Caco-2 (cell line): ENCODE measurements at regions of chr9 and their contacts with region 1.

Region 1: GRCh38 chr9:75953218-75953617 is 62.7 kb downstream of the PCSK5 start:
- DNase-seq: peak in 1 of 2 experiments; percentile 13
- H3K4me3 ChIP-seq: no peak overlapping the region
- H3K4me3 Mint-ChIP-seq: no peak overlapping the region
- H3K27ac Mint-ChIP-seq: no peak overlapping the region
- H3K4me1 ChIP-seq: no peaks in the 10 kb centered on the region
- H3K4me1 Mint-ChIP-seq: no peaks in the 10 kb centered on the region
- H3K27me3 ChIP-seq: no peaks in the 10 kb centered on the region
- H3K27me3 Mint-ChIP-seq: no peaks in the 10 kb centered on the region
- CTCF ChIP-seq: no peak

Region 2: GRCh38 chr9:75890472-75891276 is 62.5 kb before region 1 on chr9 and contains the start of gene PCSK5:
- CTCF ChIA-PET with region 1: no interaction called
- POLR2A ChIA-PET with region 1: no interaction called
- intact Hi-C with region 1: loop called (anchors 10 kb)
- DNase-seq: peak; percentile 75 to 89
- H3K4me3 ChIP-seq: peak within 1 kb of the TSS; percentile 58
- H3K4me3 Mint-ChIP-seq: peak within 1 kb of the TSS; percentile 84
- H3K27ac Mint-ChIP-seq: peak within 1 kb of the TSS; percentile 73
- H3K4me1 ChIP-seq: no peaks in the 10 kb centered on the region
- H3K4me1 Mint-ChIP-seq: no peaks in the 10 kb centered on the region
- H3K27me3 ChIP-seq: no peaks in the 10 kb centered on the region
- H3K27me3 Mint-ChIP-seq: no peaks in the 10 kb centered on the region
- CTCF ChIP-seq: no peak
- total RNA-seq, gene PCSK5: 10.9 and 13.0 TPM in 2 replicates

Region 3: GRCh38 chr9:75964427-75964826 is 11.2 kb after region 1 on chr9:
- CTCF ChIA-PET with region 1: no interaction called
- POLR2A ChIA-PET with region 1: no interaction called
- intact Hi-C with region 1: no loop called
- DNase-seq: no peak
- H3K4me3 ChIP-seq: no peak overlapping the region
- H3K4me3 Mint-ChIP-seq: no peak overlapping the region
- H3K27ac Mint-ChIP-seq: no peak overlapping the region
- H3K4me1 ChIP-seq: no peaks in the 10 kb centered on the region
- H3K4me1 Mint-ChIP-seq: no peaks in the 10 kb centered on the region
- H3K27me3 ChIP-seq: no peaks in the 10 kb centered on the region
- H3K27me3 Mint-ChIP-seq: no peaks in the 10 kb centered on the region
- CTCF ChIP-seq: no peak

Region 4: GRCh38 chr9:76311586-76311985 is 358.4 kb after region 1 on chr9:
- CTCF ChIA-PET with region 1: no interaction called
- POLR2A ChIA-PET with region 1: no interaction called
- intact Hi-C with region 1: no loop called
- DNase-seq: no peak
- H3K4me3 ChIP-seq: no peak overlapping the region
- H3K4me3 Mint-ChIP-seq: no peak overlapping the region
- H3K27ac Mint-ChIP-seq: peak overlapping the region; percentile 70
- H3K4me1 ChIP-seq: no peaks in the 10 kb centered on the region
- H3K4me1 Mint-ChIP-seq: no peaks in the 10 kb centered on the region
- H3K27me3 ChIP-seq: no peaks in the 10 kb centered on the region
- H3K27me3 Mint-ChIP-seq: no peaks in the 10 kb centered on the region
- CTCF ChIP-seq: no peak